AG04450 (cell line): ENCODE measurements at regions of chr11 and their contacts with region 1.

Region 1: DNA sequence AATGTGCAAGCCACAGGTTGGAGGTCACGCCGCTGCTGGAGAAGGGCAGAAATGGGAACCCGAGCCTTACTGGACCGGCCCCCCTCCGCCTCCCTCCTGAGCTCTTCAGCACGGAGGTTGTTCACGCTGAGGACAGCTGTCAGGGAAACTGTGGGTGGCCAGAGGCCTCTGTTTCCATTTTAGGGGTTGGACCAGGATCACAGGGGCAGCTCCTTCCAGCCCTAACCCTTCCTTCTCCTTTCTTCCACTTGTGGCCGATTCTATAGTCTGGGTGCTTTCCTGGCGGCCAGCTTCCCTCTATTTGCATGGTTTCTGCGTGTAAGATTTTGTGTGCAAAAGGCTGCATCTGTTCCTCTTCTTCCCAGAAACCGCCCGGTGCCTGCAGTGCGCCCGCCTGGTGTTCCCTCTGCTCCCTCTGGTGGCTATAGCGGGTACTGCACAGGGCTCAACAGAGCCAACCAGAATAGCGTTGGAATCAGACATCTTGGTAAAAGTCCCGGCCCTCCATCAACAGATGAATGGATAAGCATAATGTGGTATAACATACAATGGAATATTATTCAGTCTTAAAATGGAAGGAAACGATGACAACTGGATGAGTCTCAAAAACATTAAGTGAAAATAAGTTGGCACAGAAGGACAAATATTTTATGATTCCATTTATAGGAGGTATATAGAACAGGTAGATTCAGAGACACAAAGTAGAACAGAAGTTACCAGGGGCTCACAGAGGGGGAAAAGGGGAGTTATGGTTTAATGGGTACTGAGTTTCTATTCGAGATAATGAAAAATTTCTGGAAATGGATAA is 8.4 kb upstream of the SLC22A8 start:
- DNase-seq: peak; percentile 46
- H3K4me3 ChIP-seq: no peak overlapping the region
- H3K27ac ChIP-seq: no peak overlapping the region
- H3K27me3 ChIP-seq: peaks cover 5% of the 10 kb centered on the region
- CTCF ChIP-seq: peak; percentile 100

Region 2: GRCh38 chr11:62863687-62864180 is 160.3 kb before region 1 on chr11:
- CTCF ChIA-PET with region 1: no interaction called
- POLR2A ChIA-PET with region 1: no interaction called
- DNase-seq: no peak
- H3K4me3 ChIP-seq: no peak overlapping the region
- H3K27ac ChIP-seq: no peak overlapping the region
- H3K27me3 ChIP-seq: no peaks in the 10 kb centered on the region
- CTCF ChIP-seq: no peak

Region 3: DNA sequence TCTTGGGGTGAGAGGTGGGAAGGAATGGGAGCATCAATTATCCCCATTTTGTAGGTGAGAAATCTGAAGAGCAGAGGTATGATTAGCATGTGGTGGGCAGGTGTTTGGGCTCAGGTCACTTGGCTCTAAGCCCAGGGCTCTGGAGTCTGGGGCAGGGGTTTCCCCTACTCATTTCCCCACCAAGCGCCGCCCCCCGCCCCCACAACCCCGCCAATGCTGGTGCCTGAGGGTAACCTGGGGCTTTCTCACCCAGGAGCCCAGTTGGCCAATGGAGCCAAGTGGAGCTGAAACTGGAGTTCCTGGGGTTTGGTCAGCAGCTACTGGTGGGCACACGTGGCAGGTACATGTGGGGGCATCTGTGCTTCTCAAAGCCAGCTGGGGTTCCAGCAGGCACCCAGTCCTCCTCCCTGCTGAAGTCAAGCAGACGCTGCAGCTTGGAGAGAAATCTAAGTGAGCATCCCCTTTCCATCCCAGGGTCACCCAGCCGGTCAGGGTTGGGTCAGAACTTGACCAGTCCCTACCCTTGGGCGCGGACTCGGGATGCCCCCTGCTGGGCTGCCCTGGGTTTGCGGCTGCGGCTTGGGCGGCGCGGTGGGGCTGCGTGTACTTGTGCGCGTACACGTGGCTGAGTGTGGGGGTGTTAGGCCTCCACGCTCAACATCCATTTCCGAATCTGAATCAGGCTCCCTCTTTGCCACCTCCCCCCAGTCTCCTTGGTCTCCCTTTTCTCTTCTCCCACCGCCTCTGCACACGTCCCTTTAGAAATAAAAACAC is 101.2 kb before region 1 on chr11:
- CTCF ChIA-PET with region 1: interaction called, 17 read pairs
- POLR2A ChIA-PET with region 1: no interaction called
- DNase-seq: no peak
- H3K4me3 ChIP-seq: peak overlapping the region; percentile 22; the same call in 1 of the 2 replicates
- H3K27ac ChIP-seq: no peak overlapping the region
- H3K27me3 ChIP-seq: peaks cover 74% of the 10 kb centered on the region
- CTCF ChIP-seq: peak; percentile 55

Region 4: DNA sequence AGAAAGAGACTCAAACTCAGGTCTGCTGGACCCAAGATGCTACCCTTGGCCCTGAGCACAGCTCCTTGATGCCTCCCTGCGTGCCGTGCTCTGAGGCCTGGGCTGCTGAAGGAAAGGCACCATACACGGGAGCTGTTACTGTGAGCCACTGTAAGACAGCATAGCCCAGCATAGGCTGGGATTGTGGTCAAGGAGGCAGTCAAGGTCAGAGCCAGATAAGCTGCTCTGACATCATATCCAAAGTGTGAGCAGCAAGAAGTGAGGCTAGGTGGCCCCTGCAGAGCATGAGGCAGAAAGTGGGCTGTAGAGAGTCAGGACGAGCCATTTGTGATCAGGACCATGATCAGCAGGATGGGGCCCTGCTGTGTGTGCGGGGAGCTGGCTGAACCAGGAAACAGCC is 16.1 kb before region 1 on chr11:
- CTCF ChIA-PET with region 1: interaction called, 29 read pairs
- POLR2A ChIA-PET with region 1: no interaction called
- DNase-seq: no peak
- H3K4me3 ChIP-seq: no peak overlapping the region
- H3K27ac ChIP-seq: no peak overlapping the region
- H3K27me3 ChIP-seq: peaks cover 6% of the 10 kb centered on the region
- CTCF ChIP-seq: no peak